ENCODE measurements at regions of chr7 and their contacts with region 1.

Region 1: GRCh38 chr7:84194543-84195271 is at the start of gene SEMA3A:
- DNase-seq: peak; percentile 77
- ATAC-seq: peak; percentile 77
- H3K4me3 ChIP-seq: peak within 1 kb of the TSS; percentile 79
- H3K27ac ChIP-seq: peak within 1 kb of the TSS; percentile 94
- H3K4me1 ChIP-seq: peaks cover 36% of the 10 kb centered on the region
- H3K27me3 ChIP-seq: no peaks in the 10 kb centered on the region
- CTCF ChIP-seq: no peak
- total RNA-seq, gene SEMA3A: 13.7 and 16.9 TPM in 2 replicates

Region 2: DNA sequence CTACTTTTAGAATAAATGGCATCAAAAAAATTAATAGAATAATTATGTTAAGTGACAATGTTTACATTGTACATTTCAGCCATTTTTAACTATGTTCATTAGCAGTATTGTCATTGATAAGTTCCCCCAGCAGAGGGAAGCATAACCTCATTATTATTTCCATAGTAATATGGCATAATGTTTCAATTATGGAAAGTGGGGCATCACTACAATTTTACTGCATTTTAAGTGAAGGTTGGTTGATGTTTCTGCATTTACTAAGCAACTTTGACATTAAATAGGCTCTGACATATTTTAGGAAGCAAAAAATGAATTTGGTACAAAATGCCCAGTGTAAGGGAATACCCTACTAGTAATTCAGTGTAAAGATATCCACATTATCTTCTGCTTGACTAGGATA is 218.4 kb before region 1 on chr7:
- CTCF ChIA-PET with region 1: no interaction called
- POLR2A ChIA-PET with region 1: no interaction called
- intact Hi-C with region 1: loop called (anchors 1 kb)
- DNase-seq: peak; percentile 74
- ATAC-seq: peak; percentile 56
- H3K4me3 ChIP-seq: no peak overlapping the region
- H3K27ac ChIP-seq: peak overlapping the region; percentile 29
- H3K4me1 ChIP-seq: no peaks in the 10 kb centered on the region
- H3K27me3 ChIP-seq: no peaks in the 10 kb centered on the region
- CTCF ChIP-seq: peak; percentile 83

Region 3: DNA sequence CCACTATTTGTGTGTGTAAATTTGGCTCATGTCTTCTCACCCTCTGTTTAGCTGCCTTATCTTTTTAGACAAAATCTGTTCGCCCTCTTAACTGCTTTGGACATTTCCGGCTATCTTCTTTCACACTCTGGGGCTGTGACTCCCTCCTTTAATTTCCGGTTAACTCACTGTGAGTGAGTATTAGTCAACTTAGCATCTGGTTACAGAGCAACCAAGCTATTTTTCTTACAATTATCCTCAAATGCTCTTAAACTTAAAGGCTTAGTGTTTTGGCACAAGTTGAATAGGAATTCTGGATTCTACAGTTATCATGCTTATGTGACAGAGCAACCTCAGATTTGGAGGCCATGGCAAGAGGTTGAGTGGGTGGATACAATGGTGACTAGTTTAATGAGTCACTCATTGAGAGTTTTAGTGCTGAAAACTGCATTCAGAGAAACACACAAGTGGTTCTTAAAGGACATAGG is 177.5 kb after region 1 on chr7:
- CTCF ChIA-PET with region 1: no interaction called
- POLR2A ChIA-PET with region 1: no interaction called
- intact Hi-C with region 1: loop called (anchors 5 kb)
- DNase-seq: peak; percentile 88
- ATAC-seq: peak; percentile 88
- H3K4me3 ChIP-seq: no peak overlapping the region
- H3K27ac ChIP-seq: peak overlapping the region; percentile 80
- H3K4me1 ChIP-seq: peaks cover 34% of the 10 kb centered on the region
- H3K27me3 ChIP-seq: no peaks in the 10 kb centered on the region
- CTCF ChIP-seq: no peak

Region 4: GRCh38 chr7:84455788-84456187 is 261.1 kb after region 1 on chr7:
- CTCF ChIA-PET with region 1: interaction called, 5 read pairs
- POLR2A ChIA-PET with region 1: no interaction called
- intact Hi-C with region 1: loop called (anchors 2 kb)
- DNase-seq: peak; percentile 22
- ATAC-seq: no peak
- H3K4me3 ChIP-seq: no peak overlapping the region
- H3K27ac ChIP-seq: no peak overlapping the region
- H3K4me1 ChIP-seq: peaks cover 16% of the 10 kb centered on the region
- H3K27me3 ChIP-seq: no peaks in the 10 kb centered on the region
- CTCF ChIP-seq: no peak

Region 5: GRCh38 chr7:84614821-84615505 is 420.3 kb after region 1 on chr7:
- CTCF ChIA-PET with region 1: no interaction called
- POLR2A ChIA-PET with region 1: no interaction called
- intact Hi-C with region 1: loop called (anchors 10 kb)
- DNase-seq: peak; percentile 31
- ATAC-seq: no peak
- H3K4me3 ChIP-seq: no peak overlapping the region
- H3K27ac ChIP-seq: no peak overlapping the region
- H3K4me1 ChIP-seq: peaks cover 8% of the 10 kb centered on the region
- H3K27me3 ChIP-seq: no peaks in the 10 kb centered on the region
- CTCF ChIP-seq: peak; percentile 44